ENCODE measurements at regions of chr5 and their contacts with region 1.

Region 1: GRCh38 chr5:82351754-82352145 is 73.6 kb upstream of the RPS23 start:
- DNase-seq: no peak
- H3K4me3 Mint-ChIP-seq: no peak overlapping the region
- H3K27ac Mint-ChIP-seq: no peak overlapping the region
- H3K4me1 Mint-ChIP-seq: peaks cover 23% of the 10 kb centered on the region
- H3K27me3 Mint-ChIP-seq: no peaks in the 10 kb centered on the region

Region 2: GRCh38 chr5:81601919-81602318 is 749.8 kb before region 1 on chr5:
- CTCF ChIA-PET with region 1: no interaction called
- intact Hi-C with region 1: no loop called
- DNase-seq: no peak
- H3K4me3 Mint-ChIP-seq: no peak overlapping the region
- H3K27ac Mint-ChIP-seq: no peak overlapping the region
- H3K4me1 Mint-ChIP-seq: peaks cover 4% of the 10 kb centered on the region
- H3K27me3 Mint-ChIP-seq: no peaks in the 10 kb centered on the region

Region 3: GRCh38 chr5:82312373-82312856 is 39.3 kb before region 1 on chr5:
- CTCF ChIA-PET with region 1: interaction called, 30 read pairs
- intact Hi-C with region 1: loop called (anchors 2 kb)
- DNase-seq: peak; percentile 67
- H3K4me3 Mint-ChIP-seq: no peak overlapping the region
- H3K27ac Mint-ChIP-seq: no peak overlapping the region
- H3K4me1 Mint-ChIP-seq: no peaks in the 10 kb centered on the region
- H3K27me3 Mint-ChIP-seq: peaks cover 4% of the 10 kb centered on the region

Region 4: DNA sequence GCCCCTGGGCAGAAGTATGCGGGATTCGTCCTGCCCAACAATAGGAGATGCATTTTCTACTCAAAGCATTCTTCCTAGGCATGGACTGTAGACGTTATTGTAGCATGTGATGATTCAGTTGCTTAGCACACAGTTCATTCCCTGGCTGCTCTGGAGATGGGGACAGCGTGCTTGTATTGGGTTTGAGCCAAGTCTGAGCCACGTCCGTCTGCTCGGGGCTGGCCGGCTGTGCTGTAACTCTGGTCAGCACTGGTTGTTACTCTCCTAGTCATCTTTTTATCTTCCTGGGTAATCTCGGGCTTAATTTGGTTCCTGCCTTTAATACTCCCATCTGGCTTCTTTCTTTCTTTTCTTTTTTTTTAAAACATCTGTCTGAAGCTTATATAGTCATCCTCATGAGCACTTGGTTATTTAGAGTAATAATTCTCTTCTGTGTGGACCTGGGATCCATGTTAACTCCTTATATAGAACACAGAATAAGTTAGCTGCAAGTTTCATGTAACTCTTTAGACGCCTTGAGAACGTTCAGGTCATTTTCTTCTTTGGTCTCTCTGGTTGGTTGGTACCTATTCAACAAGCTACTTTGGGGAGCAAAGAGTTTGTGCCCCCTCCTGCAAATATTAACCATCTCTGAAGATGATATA is 45.2 kb after region 1 on chr5:
- CTCF ChIA-PET with region 1: no interaction called
- intact Hi-C with region 1: no loop called
- DNase-seq: no peak
- H3K4me3 Mint-ChIP-seq: no peak overlapping the region
- H3K27ac Mint-ChIP-seq: no peak overlapping the region
- H3K4me1 Mint-ChIP-seq: no peaks in the 10 kb centered on the region
- H3K27me3 Mint-ChIP-seq: no peaks in the 10 kb centered on the region

Region 5: GRCh38 chr5:82494942-82495341 is 143.2 kb after region 1 on chr5:
- CTCF ChIA-PET with region 1: interaction called, 3 read pairs
- intact Hi-C with region 1: loop called (anchors 1 kb)
- DNase-seq: no peak
- H3K4me3 Mint-ChIP-seq: no peak overlapping the region
- H3K27ac Mint-ChIP-seq: no peak overlapping the region
- H3K4me1 Mint-ChIP-seq: peaks cover 5% of the 10 kb centered on the region
- H3K27me3 Mint-ChIP-seq: peaks cover 9% of the 10 kb centered on the region

Region 6: DNA sequence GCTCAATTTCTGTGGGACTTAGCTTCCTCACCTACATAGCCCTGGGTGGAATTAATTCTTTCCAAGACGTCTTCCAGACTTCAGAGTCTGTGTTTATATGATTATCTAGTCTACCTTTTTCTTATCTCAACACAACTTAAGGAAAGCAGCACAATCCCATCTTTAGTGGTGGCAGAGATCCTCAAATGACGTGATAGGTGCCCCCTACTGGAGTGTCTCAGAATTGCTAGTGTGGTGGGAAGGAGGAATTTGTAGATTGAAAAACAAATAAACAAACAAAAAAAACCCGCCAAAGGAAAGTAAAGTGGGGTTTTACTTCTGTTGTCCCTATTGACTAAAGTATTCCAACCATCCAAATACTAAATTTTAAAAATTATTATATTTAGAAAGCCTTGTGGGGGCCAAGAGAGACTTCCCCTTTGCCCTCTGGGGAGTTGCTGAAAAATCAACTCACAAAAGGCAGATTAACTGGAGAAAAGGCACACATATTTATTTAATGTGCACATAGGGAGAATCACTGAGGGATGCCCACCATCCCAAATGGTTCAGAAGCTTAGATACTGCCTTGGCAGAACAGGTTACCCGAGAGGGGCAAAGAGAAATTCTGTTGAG is 442.2 kb after region 1 on chr5:
- CTCF ChIA-PET with region 1: interaction called, 4 read pairs
- intact Hi-C with region 1: loop called (anchors 1 kb)
- DNase-seq: peak; percentile 57
- H3K4me3 Mint-ChIP-seq: no peak overlapping the region
- H3K27ac Mint-ChIP-seq: no peak overlapping the region
- H3K4me1 Mint-ChIP-seq: no peaks in the 10 kb centered on the region
- H3K27me3 Mint-ChIP-seq: no peaks in the 10 kb centered on the region

Region 7: DNA sequence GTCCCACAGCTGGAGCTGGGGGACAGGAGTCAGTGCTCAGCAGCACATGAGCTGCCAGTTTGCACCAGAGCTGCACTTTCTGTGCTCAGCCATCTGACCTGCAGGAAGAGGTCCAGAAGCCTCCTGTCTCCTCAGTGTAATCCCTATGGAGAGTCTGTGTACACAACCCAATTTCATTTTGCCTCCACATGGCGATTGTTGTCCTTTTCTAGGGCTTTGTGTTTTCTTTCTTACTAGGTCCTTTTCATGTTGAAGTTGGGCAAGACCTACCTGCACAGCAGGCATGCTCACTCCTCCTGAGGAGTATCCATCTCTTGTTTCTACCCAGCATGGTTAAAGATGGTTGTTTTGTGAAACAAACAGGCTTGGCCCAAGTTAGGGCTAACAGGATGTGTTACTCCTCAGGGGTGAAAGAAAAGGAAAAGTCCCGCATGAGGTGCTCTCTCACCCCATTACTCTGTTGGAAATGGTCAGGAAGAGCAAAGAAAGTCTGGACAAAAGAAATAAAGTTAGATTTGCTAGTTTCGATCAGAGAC is 452.5 kb after region 1 on chr5:
- CTCF ChIA-PET with region 1: no interaction called
- intact Hi-C with region 1: no loop called
- DNase-seq: no peak
- H3K4me3 Mint-ChIP-seq: no peak overlapping the region
- H3K27ac Mint-ChIP-seq: no peak overlapping the region
- H3K4me1 Mint-ChIP-seq: no peaks in the 10 kb centered on the region
- H3K27me3 Mint-ChIP-seq: peaks cover 3% of the 10 kb centered on the region

Region 8: DNA sequence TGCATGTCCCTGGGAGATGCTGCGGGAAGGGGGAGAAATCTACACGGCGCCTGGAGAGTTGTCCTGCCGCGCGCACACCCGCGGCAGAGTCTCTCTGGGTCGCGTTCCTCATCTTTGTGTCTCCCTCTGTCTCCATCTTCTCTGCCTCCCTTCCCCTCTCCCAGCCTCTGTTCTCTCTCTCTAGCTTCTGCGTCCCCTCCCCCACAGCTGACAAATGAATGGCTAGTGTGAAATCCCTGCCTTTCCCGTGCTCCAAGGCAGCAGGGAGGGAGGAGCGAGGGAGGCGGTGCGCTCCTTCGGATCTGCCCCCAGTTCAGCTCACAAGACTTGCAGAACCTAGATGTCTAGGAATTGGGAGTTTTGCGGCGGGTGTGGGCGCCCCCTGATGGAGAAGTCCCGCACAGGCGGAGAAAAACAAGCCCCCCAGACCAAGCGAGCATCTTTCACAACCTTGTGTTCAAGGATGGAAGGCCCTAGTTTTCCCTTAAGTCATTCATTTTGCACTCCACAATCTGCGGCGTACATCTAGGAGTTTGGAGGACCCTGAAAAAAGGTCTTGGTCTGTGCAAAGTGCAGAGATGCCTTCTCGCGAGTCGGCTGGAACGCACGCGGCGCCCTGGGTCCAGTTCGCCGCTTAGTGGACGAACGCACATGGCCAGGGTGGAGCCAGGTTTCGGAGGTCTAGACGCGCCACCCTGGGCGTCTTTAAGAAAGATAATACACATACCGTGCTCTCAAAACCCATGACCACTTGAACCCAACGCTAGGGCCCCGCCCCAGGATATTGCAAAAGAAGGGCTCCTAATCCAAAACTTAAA is 1121.8 kb after region 1 on chr5:
- CTCF ChIA-PET with region 1: no interaction called
- intact Hi-C with region 1: loop called (anchors 1 kb)
- DNase-seq: peak; percentile 76
- H3K4me3 Mint-ChIP-seq: peak overlapping the region; percentile 76
- H3K27ac Mint-ChIP-seq: no peak overlapping the region
- H3K4me1 Mint-ChIP-seq: peaks cover 36% of the 10 kb centered on the region
- H3K27me3 Mint-ChIP-seq: peaks cover 79% of the 10 kb centered on the region

Region 9: GRCh38 chr5:83718195-83718825 is 1366.6 kb after region 1 on chr5:
- CTCF ChIA-PET with region 1: no interaction called
- intact Hi-C with region 1: loop called (anchors 5 kb)
- DNase-seq: peak; percentile 33
- H3K4me3 Mint-ChIP-seq: no peak overlapping the region
- H3K27ac Mint-ChIP-seq: no peak overlapping the region
- H3K4me1 Mint-ChIP-seq: peaks cover 6% of the 10 kb centered on the region
- H3K27me3 Mint-ChIP-seq: peaks cover 51% of the 10 kb centered on the region

Measured in activated naive CD4-positive, alpha-beta T cell treated with anti-CD3 and anti-CD28 coated beads for 36 hours (primary cell).